Caco-2 (cell line): ENCODE measurements at regions of chr5 and their contacts with region 1.

Region 1: GRCh38 chr5:181159286-181159829 is 12.0 kb downstream of the OR2V2 start:
- DNase-seq: peak; percentile 89 to 93
- H3K4me3 ChIP-seq: no peak overlapping the region
- H3K4me3 Mint-ChIP-seq: peak overlapping the region; percentile 22
- H3K27ac Mint-ChIP-seq: peak overlapping the region; percentile 70
- H3K4me1 ChIP-seq: peaks cover 11% of the 10 kb centered on the region
- H3K4me1 Mint-ChIP-seq: peaks cover 7% of the 10 kb centered on the region
- H3K27me3 ChIP-seq: no peaks in the 10 kb centered on the region
- H3K27me3 Mint-ChIP-seq: peaks cover 3% of the 10 kb centered on the region
- CTCF ChIP-seq: peak; percentile 92 to 93

Region 2: GRCh38 chr5:180689071-180689694 is 470.2 kb before region 1 on chr5:
- CTCF ChIA-PET with region 1: no interaction called
- POLR2A ChIA-PET with region 1: no interaction called
- intact Hi-C with region 1: no loop called
- DNase-seq: no peak
- H3K4me3 ChIP-seq: no peak overlapping the region
- H3K4me3 Mint-ChIP-seq: no peak overlapping the region
- H3K27ac Mint-ChIP-seq: no peak overlapping the region
- H3K4me1 ChIP-seq: no peaks in the 10 kb centered on the region
- H3K4me1 Mint-ChIP-seq: no peaks in the 10 kb centered on the region
- H3K27me3 ChIP-seq: no peaks in the 10 kb centered on the region; the same call in 1 of the 2 replicates
- H3K27me3 Mint-ChIP-seq: peaks cover 47% of the 10 kb centered on the region
- CTCF ChIP-seq: no peak

Region 3: GRCh38 chr5:180885872-180886418 is 273.4 kb before region 1 on chr5:
- CTCF ChIA-PET with region 1: no interaction called
- POLR2A ChIA-PET with region 1: no interaction called
- intact Hi-C with region 1: no loop called
- DNase-seq: peak; percentile 84 to 92
- H3K4me3 ChIP-seq: peak overlapping the region; percentile 26
- H3K4me3 Mint-ChIP-seq: peak overlapping the region; percentile 59
- H3K27ac Mint-ChIP-seq: peak overlapping the region; percentile 73
- H3K4me1 ChIP-seq: peaks cover 16% of the 10 kb centered on the region
- H3K4me1 Mint-ChIP-seq: peaks cover 11% of the 10 kb centered on the region
- H3K27me3 ChIP-seq: no peaks in the 10 kb centered on the region
- H3K27me3 Mint-ChIP-seq: no peaks in the 10 kb centered on the region
- CTCF ChIP-seq: no peak

Region 4: GRCh38 chr5:181109489-181110013 is 49.8 kb before region 1 on chr5:
- CTCF ChIA-PET with region 1: no interaction called
- POLR2A ChIA-PET with region 1: no interaction called
- intact Hi-C with region 1: no loop called
- DNase-seq: no peak
- H3K4me3 ChIP-seq: no peak overlapping the region
- H3K4me3 Mint-ChIP-seq: no peak overlapping the region
- H3K27ac Mint-ChIP-seq: no peak overlapping the region
- H3K4me1 ChIP-seq: no peaks in the 10 kb centered on the region
- H3K4me1 Mint-ChIP-seq: no peaks in the 10 kb centered on the region
- H3K27me3 ChIP-seq: no peaks in the 10 kb centered on the region; the same call in 1 of the 2 replicates
- H3K27me3 Mint-ChIP-seq: peaks cover 3% of the 10 kb centered on the region
- CTCF ChIP-seq: no peak

Region 5: GRCh38 chr5:181173420-181174342 is 14.3 kb after region 1 on chr5:
- CTCF ChIA-PET with region 1: interaction called, 4 read pairs
- POLR2A ChIA-PET with region 1: no interaction called
- intact Hi-C with region 1: loop called (anchors 1 kb)
- DNase-seq: peak; percentile 72 to 75
- H3K4me3 ChIP-seq: peak overlapping the region; percentile 42
- H3K4me3 Mint-ChIP-seq: peak overlapping the region; percentile 96
- H3K27ac Mint-ChIP-seq: peak overlapping the region; percentile 78
- H3K4me1 ChIP-seq: peaks cover 7% of the 10 kb centered on the region
- H3K4me1 Mint-ChIP-seq: peaks cover 15% of the 10 kb centered on the region
- H3K27me3 ChIP-seq: no peaks in the 10 kb centered on the region
- H3K27me3 Mint-ChIP-seq: peaks cover 3% of the 10 kb centered on the region
- CTCF ChIP-seq: peak in 1 of 2 experiments; percentile 2

Region 6: DNA sequence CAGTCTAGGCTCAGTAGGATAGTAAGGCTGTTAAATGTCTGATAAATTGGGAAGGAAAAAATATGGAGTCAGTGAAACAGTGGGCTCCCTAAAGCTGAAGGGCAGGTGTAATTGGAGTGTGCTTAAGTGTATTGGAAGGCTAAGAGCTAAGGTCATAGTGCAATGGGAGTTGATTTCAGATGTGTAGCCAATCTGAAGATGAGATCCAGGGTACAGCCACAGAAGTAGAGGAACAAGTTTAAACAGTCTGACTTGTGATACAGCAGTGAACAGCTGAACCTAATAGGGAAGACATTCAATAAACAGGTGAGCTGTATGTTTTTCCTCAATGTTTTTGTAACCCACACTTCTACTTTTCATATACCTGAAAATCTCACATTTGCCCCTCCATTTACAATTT is 95.3 kb after region 1 on chr5:
- CTCF ChIA-PET with region 1: no interaction called
- POLR2A ChIA-PET with region 1: no interaction called
- intact Hi-C with region 1: no loop called
- DNase-seq: no peak
- H3K4me3 ChIP-seq: no peak overlapping the region
- H3K4me3 Mint-ChIP-seq: no peak overlapping the region
- H3K27ac Mint-ChIP-seq: no peak overlapping the region
- H3K4me1 ChIP-seq: peaks cover 8% of the 10 kb centered on the region; the same call in 1 of the 2 replicates
- H3K4me1 Mint-ChIP-seq: peaks cover 4% of the 10 kb centered on the region
- H3K27me3 ChIP-seq: no peaks in the 10 kb centered on the region
- H3K27me3 Mint-ChIP-seq: no peaks in the 10 kb centered on the region
- CTCF ChIP-seq: no peak